ENCODE measurements at regions of chr11 and their contacts with region 1.

Region 1: GRCh38 chr11:120303004-120303637 is 22.0 kb upstream of the TLCD5 start:
- DNase-seq: peak; percentile 84
- ATAC-seq: peak; percentile 94
- H3K4me3 Mint-ChIP-seq: no peak overlapping the region
- H3K27ac Mint-ChIP-seq: no peak overlapping the region
- H3K4me1 Mint-ChIP-seq: no peaks in the 10 kb centered on the region
- H3K27me3 Mint-ChIP-seq: peaks cover 24% of the 10 kb centered on the region

Region 2: DNA sequence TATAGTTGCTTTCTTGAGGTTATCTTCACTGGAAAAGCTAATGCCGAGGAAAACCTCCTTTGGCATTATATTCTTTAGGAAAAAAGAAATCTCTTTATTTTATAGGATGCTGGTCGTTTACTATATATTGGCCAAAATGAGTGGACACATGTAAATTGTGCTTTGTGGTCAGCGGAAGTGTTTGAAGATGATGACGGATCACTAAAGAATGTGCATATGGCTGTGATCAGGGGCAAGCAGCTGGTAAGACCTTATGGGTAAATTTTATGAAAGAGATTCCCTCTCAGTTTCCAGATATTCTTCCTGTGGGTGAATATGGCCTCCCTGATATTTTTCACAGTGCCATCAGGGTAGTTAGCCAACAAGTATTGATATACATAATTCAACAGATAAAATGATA is 1805.3 kb before region 1 on chr11:
- CTCF ChIA-PET with region 1: no interaction called
- POLR2A ChIA-PET with region 1: no interaction called
- intact Hi-C with region 1: no loop called
- DNase-seq: no peak
- ATAC-seq: no peak
- H3K4me3 Mint-ChIP-seq: no peak overlapping the region
- H3K27ac Mint-ChIP-seq: no peak overlapping the region
- H3K4me1 Mint-ChIP-seq: peaks cover under 1% of the 10 kb centered on the region
- H3K27me3 Mint-ChIP-seq: no peaks in the 10 kb centered on the region

Region 3: GRCh38 chr11:120172054-120172911 is 130.8 kb before region 1 on chr11:
- CTCF ChIA-PET with region 1: interaction called, 19 read pairs
- POLR2A ChIA-PET with region 1: no interaction called
- intact Hi-C with region 1: loop called (anchors 1 kb)
- DNase-seq: peak; percentile 76
- ATAC-seq: peak; percentile 60
- H3K4me3 Mint-ChIP-seq: no peak overlapping the region
- H3K27ac Mint-ChIP-seq: no peak overlapping the region
- H3K4me1 Mint-ChIP-seq: peaks cover 4% of the 10 kb centered on the region
- H3K27me3 Mint-ChIP-seq: peaks cover 61% of the 10 kb centered on the region

Region 4: DNA sequence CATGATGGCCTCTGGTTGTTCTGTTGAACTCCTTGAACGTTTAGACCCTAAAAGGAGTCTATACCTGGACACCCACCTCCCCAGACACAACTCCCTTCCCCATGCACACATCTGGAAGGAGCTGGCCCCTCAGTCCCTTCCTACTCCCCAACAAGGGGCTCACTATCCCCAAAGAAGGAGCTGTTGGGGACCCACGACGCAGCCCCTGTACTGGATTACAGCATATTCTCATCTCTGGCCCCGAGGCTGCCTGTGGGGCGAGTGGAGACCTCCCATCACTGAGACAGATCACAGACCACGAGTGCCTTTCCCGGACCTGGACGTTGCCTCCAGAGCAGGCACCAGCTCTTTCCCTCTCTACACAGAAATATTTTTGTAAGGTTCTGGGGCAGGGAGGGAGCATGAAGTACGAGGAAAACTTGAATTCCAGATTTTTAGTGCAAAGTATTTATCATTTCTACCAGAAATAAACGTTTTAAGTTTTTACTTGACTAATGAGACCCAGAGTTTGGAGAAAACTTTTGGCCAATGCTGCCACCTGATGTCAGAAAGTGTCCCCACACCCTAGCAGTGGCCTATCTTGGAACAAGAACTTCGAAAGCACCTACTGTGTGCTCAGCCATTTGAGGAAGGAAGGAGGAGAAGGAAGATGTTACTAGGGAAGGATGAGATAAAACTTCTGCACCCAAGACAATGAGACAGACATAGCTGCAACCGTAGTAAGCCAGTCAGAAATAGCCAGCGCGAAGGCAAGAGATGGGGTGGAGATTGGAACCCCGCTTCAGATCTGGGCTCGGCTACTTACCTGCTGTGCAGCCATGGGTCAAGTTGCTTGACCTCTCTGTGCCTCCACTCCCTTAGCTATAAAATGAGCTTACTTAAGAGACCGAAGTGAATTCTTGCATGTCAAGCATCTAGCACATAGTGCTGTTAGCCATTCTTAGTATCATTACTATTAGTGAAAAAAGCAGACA is 73.4 kb before region 1 on chr11:
- CTCF ChIA-PET with region 1: interaction called, 164 read pairs
- POLR2A ChIA-PET with region 1: no interaction called
- intact Hi-C with region 1: no loop called
- DNase-seq: peak; percentile 41
- ATAC-seq: no peak
- H3K4me3 Mint-ChIP-seq: no peak overlapping the region
- H3K27ac Mint-ChIP-seq: no peak overlapping the region
- H3K4me1 Mint-ChIP-seq: peaks cover 3% of the 10 kb centered on the region
- H3K27me3 Mint-ChIP-seq: peaks cover 9% of the 10 kb centered on the region

Region 5: GRCh38 chr11:120235024-120235861 is 67.9 kb before region 1 on chr11:
- CTCF ChIA-PET with region 1: interaction called, 164 read pairs
- POLR2A ChIA-PET with region 1: interaction called, 4 read pairs
- intact Hi-C with region 1: loop called (anchors 1 kb)
- DNase-seq: peak; percentile 84
- ATAC-seq: peak; percentile 88
- H3K4me3 Mint-ChIP-seq: no peak overlapping the region
- H3K27ac Mint-ChIP-seq: no peak overlapping the region
- H3K4me1 Mint-ChIP-seq: no peaks in the 10 kb centered on the region
- H3K27me3 Mint-ChIP-seq: peaks cover 40% of the 10 kb centered on the region

Region 6: GRCh38 chr11:120248551-120249278 is 54.4 kb before region 1 on chr11:
- CTCF ChIA-PET with region 1: interaction called, 22 read pairs
- POLR2A ChIA-PET with region 1: no interaction called
- intact Hi-C with region 1: no loop called
- DNase-seq: no peak
- ATAC-seq: peak; percentile 88
- H3K4me3 Mint-ChIP-seq: no peak overlapping the region
- H3K27ac Mint-ChIP-seq: peak overlapping the region; percentile 44
- H3K4me1 Mint-ChIP-seq: peaks cover 29% of the 10 kb centered on the region
- H3K27me3 Mint-ChIP-seq: peaks cover 63% of the 10 kb centered on the region

Region 7: DNA sequence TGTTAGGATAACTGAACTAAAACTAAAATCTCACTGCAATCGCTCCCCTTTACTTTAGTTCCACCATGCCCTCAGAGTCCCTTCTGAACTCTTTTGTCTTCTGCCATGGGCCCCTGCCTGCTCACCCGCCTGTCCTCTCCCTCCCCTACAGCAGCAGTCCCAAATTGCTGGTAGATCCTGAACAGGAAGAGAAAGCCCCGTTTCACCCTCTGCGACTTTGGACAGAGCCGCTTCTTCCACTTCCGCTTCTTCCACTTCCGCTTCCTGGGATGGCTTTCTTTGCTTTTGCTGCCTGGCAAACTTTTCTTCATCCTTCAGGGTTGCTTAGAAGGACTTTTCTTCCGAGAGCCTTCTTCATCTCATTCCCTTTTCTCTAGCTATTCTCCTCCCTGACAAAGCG is 13.7 kb before region 1 on chr11:
- CTCF ChIA-PET with region 1: interaction called, 15 read pairs
- POLR2A ChIA-PET with region 1: no interaction called
- intact Hi-C with region 1: no loop called
- DNase-seq: no peak
- ATAC-seq: no peak
- H3K4me3 Mint-ChIP-seq: no peak overlapping the region
- H3K27ac Mint-ChIP-seq: no peak overlapping the region
- H3K4me1 Mint-ChIP-seq: no peaks in the 10 kb centered on the region
- H3K27me3 Mint-ChIP-seq: peaks cover 25% of the 10 kb centered on the region

Region 8: GRCh38 chr11:120316842-120317688 is 13.9 kb after region 1 on chr11:
- CTCF ChIA-PET with region 1: interaction called, 13 read pairs
- POLR2A ChIA-PET with region 1: no interaction called
- intact Hi-C with region 1: no loop called
- DNase-seq: no peak
- ATAC-seq: no peak
- H3K4me3 Mint-ChIP-seq: no peak overlapping the region
- H3K27ac Mint-ChIP-seq: no peak overlapping the region
- H3K4me1 Mint-ChIP-seq: no peaks in the 10 kb centered on the region
- H3K27me3 Mint-ChIP-seq: peaks cover 13% of the 10 kb centered on the region

Measured in activated CD4-positive, alpha-beta T cell treated with anti-CD3 and anti-CD28 coated beads for 36 hours (primary cell).